Mammary epithelial cell (primary cell): ENCODE measurements at regions of chr7 and their contacts with region 1.

Region 1: DNA sequence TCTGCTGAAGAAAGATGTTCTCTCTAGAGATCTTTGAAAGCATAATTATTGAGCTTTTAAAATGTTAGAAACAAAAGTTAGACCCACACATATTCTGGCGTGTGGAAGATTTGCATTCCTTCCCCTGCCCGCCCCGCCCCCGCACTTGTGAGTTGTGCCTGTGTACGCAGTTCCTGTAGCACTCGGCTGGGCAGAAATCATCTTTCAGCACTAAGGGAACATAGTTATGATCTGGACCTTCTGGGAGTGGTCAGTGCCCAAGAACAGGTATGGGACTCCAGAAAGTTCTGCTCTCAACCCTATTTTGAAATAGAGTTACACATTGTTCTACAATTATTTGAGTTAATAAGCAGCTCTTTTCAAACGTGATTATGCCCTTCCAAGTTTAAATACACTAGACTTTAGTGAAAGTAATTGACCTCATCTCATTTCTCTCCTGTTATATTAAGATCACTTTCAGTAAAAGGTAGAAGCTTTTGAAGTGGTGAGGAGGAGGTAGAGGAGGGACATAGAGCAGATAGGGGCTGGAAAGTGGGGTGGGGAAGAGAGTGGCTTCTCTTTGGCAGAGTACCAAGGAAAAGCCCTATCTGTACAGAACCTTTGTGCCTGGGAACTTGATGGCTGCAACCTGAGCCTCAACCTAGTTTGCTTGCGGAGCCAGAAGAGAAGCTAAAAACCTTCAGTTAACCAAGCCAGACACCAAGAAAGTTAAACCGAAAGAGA is 5.7 kb downstream of the BLVRA start:
- DNase-seq: peak; percentile 67
- H3K4me3 ChIP-seq: peak overlapping the region in 1 of 3 experiments; percentile 8
- H3K27ac ChIP-seq: peak overlapping the region; percentile 42
- H3K4me1 ChIP-seq: peaks cover 24% of the 10 kb centered on the region
- H3K27me3 ChIP-seq: no peaks in the 10 kb centered on the region
- CTCF ChIP-seq: no peak

Region 2: GRCh38 chr7:43721193-43721806 is 42.9 kb before region 1 on chr7:
- CTCF ChIA-PET with region 1: no interaction called
- dilution Hi-C with region 1: loop called (anchors 5 kb)
- in situ Hi-C with region 1: no loop called
- intact Hi-C with region 1: loop called (anchors 5 kb)
- DNase-seq: no peak
- H3K4me3 ChIP-seq: no peak overlapping the region
- H3K27ac ChIP-seq: no peak overlapping the region
- H3K4me1 ChIP-seq: peaks cover 4% of the 10 kb centered on the region
- H3K27me3 ChIP-seq: no peaks in the 10 kb centered on the region
- CTCF ChIP-seq: peak; percentile 50 to 55

Region 3: GRCh38 chr7:43834463-43835251 is 70.5 kb after region 1 on chr7:
- CTCF ChIA-PET with region 1: no interaction called
- dilution Hi-C with region 1: no loop called
- in situ Hi-C with region 1: no loop called
- intact Hi-C with region 1: no loop called
- DNase-seq: peak; percentile 66
- H3K4me3 ChIP-seq: no peak overlapping the region
- H3K27ac ChIP-seq: no peak overlapping the region
- H3K4me1 ChIP-seq: peaks cover 3% of the 10 kb centered on the region
- H3K27me3 ChIP-seq: no peaks in the 10 kb centered on the region
- CTCF ChIP-seq: no peak

Region 4: GRCh38 chr7:45089341-45089891 is 1325.2 kb after region 1 on chr7:
- CTCF ChIA-PET with region 1: no interaction called
- dilution Hi-C with region 1: no loop called
- in situ Hi-C with region 1: no loop called
- intact Hi-C with region 1: no loop called
- DNase-seq: peak; percentile 57
- H3K4me3 ChIP-seq: peak overlapping the region; percentile 44 to 51 (median 47)
- H3K27ac ChIP-seq: no peak overlapping the region
- H3K4me1 ChIP-seq: peaks cover 22% of the 10 kb centered on the region
- H3K27me3 ChIP-seq: no peaks in the 10 kb centered on the region
- CTCF ChIP-seq: no peak